SK-N-SH (cell line): ENCODE measurements at regions of chr17 and their contacts with region 1.

Region 1: DNA sequence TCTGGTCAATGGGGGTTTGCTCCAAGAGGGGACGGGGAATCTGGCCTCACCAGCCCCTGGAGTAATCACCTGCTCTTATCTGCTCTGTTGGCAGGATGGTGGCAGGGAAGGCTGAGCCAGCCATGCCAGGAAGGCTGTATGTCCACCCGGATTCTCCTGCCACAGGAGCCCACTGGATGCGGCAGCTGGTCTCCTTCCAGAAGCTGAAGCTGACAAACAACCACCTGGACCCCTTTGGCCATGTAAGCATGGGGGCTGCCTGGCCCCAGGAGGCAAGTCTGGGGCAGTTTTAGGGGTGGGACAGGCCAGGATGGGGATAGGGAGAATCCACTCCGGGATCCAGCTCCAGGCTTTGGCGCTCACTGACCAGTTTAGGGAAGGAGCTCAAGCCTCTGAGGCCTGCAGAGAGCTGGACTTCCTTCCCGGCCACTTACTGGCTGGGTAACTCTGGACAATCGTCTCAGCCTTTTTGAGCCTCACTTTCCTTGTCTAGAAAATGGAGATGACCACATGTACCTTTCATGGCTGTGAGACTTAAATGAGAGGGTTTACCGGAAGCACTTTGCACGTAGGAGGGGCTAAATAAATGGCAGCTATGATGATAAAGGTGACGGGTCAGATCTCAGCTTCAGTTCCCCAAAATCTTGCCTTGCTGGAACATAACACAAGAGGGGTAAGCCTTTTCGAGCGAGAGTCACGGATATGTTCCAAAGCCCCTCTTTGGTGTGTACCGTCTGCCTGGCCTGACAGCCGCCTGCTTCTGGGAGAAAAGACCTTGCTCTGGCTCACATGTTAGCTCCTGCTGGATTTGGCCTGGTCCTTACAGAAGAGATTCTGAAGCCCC is 15.4 kb downstream of the TBX4 start:
- DNase-seq: peak; percentile 76
- H3K4me3 ChIP-seq: no peak overlapping the region
- H3K27ac ChIP-seq: peak overlapping the region in 1 of 2 experiments; percentile 51; a peak in 1 of 4 replicates
- H3K4me1 ChIP-seq: peaks cover 0 to 24% of the 10 kb centered on the region in 2 experiments; a peak in 1 of 4 replicates
- H3K27me3 ChIP-seq: no peaks in the 10 kb centered on the region
- CTCF ChIP-seq: no peak
- EP300 ChIP-seq: no peak
- RAD21 ChIP-seq: no peak

Region 2: GRCh38 chr17:61481421-61481820 is 13.8 kb after region 1 on chr17:
- CTCF ChIA-PET with region 1: interaction called, 16 read pairs
- POLR2A ChIA-PET with region 1: interaction called, 4 read pairs
- DNase-seq: no peak
- H3K4me3 ChIP-seq: no peak overlapping the region
- H3K27ac ChIP-seq: no peak overlapping the region
- H3K4me1 ChIP-seq: peaks cover 0 to 47% of the 10 kb centered on the region in 2 experiments; a peak in 2 of 4 replicates
- H3K27me3 ChIP-seq: no peaks in the 10 kb centered on the region
- CTCF ChIP-seq: no peak
- EP300 ChIP-seq: no peak
- RAD21 ChIP-seq: no peak

Region 3: GRCh38 chr17:61647047-61647446 is 179.4 kb after region 1 on chr17:
- CTCF ChIA-PET with region 1: no interaction called
- POLR2A ChIA-PET with region 1: no interaction called
- DNase-seq: no peak
- H3K4me3 ChIP-seq: no peak overlapping the region
- H3K27ac ChIP-seq: peak overlapping the region in 1 of 2 experiments; percentile 38; a peak in 1 of 4 replicates
- H3K4me1 ChIP-seq: peaks cover 0 to 6% of the 10 kb centered on the region in 2 experiments; a peak in 1 of 4 replicates
- H3K27me3 ChIP-seq: no peaks in the 10 kb centered on the region
- CTCF ChIP-seq: no peak
- EP300 ChIP-seq: no peak
- RAD21 ChIP-seq: no peak